Ovary (tissue), 10 donors: ENCODE measurements at regions of chr11 and their contacts with region 1.

Region 1: GRCh38 chr11:12893787-12894672 is 115.1 kb upstream of the RASSF10 start:
- DNase-seq: peak; percentile 42 to 80 (median 74)
- H3K4me3 ChIP-seq: no peak overlapping the region
- H3K27ac ChIP-seq: no peak overlapping the region
- H3K4me1 ChIP-seq: peaks cover 11% of the 10 kb centered on the region
- H3K27me3 ChIP-seq: no peaks in the 10 kb centered on the region
- CTCF ChIP-seq: peak; percentile 63 to 85 (median 81)
- EP300 ChIP-seq: no peak
- POLR2A ChIP-seq: no peak

Region 2: GRCh38 chr11:12331239-12331874 is 562.7 kb before region 1 on chr11:
- intact Hi-C with region 1: loop called (anchors 2 to 5 kb)
- DNase-seq: peak; percentile 84 to 92 (median 90)
- H3K4me3 ChIP-seq: no peak overlapping the region
- H3K27ac ChIP-seq: no peak overlapping the region
- H3K4me1 ChIP-seq: no peaks in the 10 kb centered on the region
- H3K27me3 ChIP-seq: no peaks in the 10 kb centered on the region
- CTCF ChIP-seq: peak; percentile 57 to 86 (median 85)
- EP300 ChIP-seq: no peak
- POLR2A ChIP-seq: no peak

Region 3: DNA sequence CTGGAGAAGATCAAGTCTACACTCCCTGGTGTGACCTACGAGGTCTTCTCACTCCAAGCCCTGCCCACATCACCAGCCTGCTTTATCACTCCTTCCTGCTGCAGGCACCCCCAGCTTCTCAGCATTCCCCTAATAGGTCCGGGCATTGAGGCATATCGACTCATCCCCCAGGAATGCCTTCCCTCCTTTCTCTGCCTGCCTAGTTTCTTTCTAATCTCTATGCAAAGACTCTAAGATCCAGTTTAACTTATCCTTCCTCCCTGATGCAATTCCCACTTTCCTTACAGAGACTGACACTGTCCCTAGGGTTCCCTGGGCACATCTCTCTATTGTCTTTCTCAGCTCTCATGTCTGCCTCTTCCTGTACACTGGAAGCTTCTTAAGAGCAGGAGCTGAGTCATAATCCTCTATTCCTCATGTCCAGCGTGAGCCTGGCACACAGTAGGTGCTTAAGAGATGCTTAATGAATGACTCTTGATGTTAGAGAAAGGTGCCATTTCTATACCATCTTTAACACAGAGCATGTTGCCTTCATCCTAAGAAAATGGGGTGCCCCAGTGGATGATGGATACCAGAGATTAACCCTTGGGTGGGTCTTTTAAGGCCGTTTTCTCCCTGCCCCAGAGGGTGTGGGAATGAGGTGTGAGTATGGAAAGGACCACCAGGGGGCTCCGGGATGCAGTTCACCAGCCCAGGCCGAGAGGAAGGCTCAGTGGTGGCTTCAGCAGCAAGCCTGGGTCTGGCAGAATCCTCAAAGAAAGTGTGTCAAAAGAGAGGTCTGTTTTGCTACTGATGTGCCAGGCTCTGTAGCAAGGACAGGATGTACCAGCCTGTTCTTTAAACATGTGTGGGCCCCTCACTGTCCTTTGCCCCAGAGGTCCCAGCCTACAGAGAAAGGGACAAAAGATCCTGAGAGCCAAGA is 482.0 kb before region 1 on chr11:
- intact Hi-C with region 1: loop called in 2 of 4 experiments (anchors 2 to 10 kb)
- DNase-seq: peak; percentile 70 to 80 (median 71)
- H3K4me3 ChIP-seq: no peak overlapping the region
- H3K27ac ChIP-seq: peak overlapping the region in 1 of 2 donors; percentile 57
- H3K4me1 ChIP-seq: peaks cover 28% of the 10 kb centered on the region
- H3K27me3 ChIP-seq: no peaks in the 10 kb centered on the region
- CTCF ChIP-seq: peak; percentile 37 to 76 (median 63)
- EP300 ChIP-seq: no peak
- POLR2A ChIP-seq: no peak

Region 4: GRCh38 chr11:12724301-12725046 is 169.6 kb before region 1 on chr11:
- intact Hi-C with region 1: no loop called
- DNase-seq: peak; percentile 85 to 93 (median 90)
- H3K4me3 ChIP-seq: no peak overlapping the region
- H3K27ac ChIP-seq: peak overlapping the region in 1 of 2 donors; percentile 1
- H3K4me1 ChIP-seq: peaks cover 17% of the 10 kb centered on the region
- H3K27me3 ChIP-seq: no peaks in the 10 kb centered on the region
- CTCF ChIP-seq: no peak
- EP300 ChIP-seq: no peak
- POLR2A ChIP-seq: no peak

Region 5: GRCh38 chr11:12930850-12931249 is 36.8 kb after region 1 on chr11:
- intact Hi-C with region 1: no loop called
- DNase-seq: no peak
- H3K4me3 ChIP-seq: no peak overlapping the region
- H3K27ac ChIP-seq: no peak overlapping the region
- H3K4me1 ChIP-seq: no peaks in the 10 kb centered on the region
- H3K27me3 ChIP-seq: no peaks in the 10 kb centered on the region
- CTCF ChIP-seq: no peak
- EP300 ChIP-seq: no peak
- POLR2A ChIP-seq: no peak

Region 6: DNA sequence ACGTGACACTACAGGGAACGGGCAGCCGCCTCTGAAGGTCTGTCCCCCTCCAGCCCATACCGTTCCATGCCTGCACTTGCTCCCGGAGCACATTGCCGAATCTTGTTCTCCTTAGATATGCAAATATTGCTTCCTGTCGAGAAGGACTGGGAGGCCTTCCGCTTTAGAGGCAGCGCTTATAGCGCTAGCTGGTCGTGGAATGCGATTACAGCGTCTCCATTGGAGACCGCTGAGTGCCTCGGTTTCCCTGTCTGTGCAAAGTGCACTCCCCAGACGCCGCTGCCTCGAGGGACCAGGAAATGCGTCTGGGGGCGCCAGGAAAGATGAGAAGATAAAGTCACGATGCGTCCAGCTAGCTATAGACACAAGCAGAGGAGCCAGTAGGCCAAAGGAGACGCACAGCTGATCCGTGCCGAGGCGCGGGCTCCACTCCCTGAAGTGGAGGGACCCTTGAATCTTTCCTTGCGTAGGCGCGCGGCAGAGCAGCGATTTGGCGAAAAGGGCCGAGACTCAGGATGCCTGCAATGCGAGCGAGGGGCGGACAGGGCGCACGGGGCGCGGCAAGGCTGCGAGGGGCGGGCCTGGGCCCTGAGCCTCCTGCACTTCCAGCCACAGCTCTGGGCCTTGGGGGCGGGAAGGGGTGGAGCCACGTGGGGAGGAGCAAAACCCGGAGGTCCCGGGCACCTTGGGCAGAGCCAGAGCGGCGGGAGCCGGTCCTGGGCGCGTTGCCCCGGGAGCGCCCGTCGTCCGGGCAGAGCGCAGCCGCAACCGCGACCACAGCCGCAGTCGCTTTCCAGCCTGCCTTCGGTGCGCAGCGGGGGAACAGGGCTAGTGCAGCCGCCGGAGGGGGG is 114.8 kb after region 1 on chr11 and contains the start of gene RASSF10:
- intact Hi-C with region 1: no loop called
- DNase-seq: peak in 2 of 5 donors; percentile 23 to 33
- H3K4me3 ChIP-seq: no peak within 1 kb of the TSS
- H3K27ac ChIP-seq: no peak within 1 kb of the TSS
- H3K4me1 ChIP-seq: peaks cover 3% of the 10 kb centered on the region
- H3K27me3 ChIP-seq: no peaks in the 10 kb centered on the region
- CTCF ChIP-seq: no peak
- EP300 ChIP-seq: no peak
- POLR2A ChIP-seq: no peak
- total RNA-seq, gene RASSF10: 0.36 to 3.8 (median 0.97) TPM in 5 of 7 donors, not detected in the others